Naive thymus-derived CD8-positive, alpha-beta T cell (primary cell): ENCODE measurements at regions of chr3 and their contacts with region 1.

Region 1: DNA sequence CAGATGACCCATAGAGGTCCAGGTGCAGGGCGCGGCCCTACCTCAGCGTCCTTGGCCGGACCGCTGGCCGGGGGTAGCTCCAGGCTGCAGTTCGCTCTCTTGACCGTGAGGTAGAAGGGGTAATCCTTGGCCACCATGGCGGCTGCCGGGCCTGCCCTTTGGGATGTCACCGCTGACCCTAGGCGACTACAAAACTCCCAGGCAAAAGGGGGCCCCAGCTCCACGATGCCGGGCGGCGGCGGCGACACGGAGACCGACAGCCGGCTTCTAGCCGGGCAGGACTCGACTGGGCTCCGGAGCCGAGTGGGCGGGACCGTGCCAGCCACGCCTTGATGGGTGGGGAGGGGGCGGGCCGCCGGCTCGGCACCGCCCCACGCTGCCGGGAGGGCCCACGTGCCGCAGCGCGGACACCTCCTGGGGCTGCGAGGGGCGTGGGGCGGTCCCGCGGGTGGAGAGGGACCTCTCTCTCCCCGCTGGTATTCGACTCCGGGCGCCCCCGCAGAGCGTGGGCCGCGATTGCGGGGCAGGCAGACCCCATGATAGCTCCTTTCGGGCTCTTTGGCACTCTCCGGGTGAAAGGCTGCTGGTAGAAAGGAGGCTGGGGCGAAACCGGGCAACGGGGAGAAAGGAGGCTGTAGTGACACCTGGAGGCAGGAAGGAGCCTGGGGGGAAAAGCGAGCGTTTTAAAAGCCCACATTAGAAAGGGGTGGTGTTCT is at the start of gene ARHGEF3:
- DNase-seq: peak; percentile 81 to 95 (median 90)
- ATAC-seq: peak; percentile 76 to 83
- H3K4me3 Mint-ChIP-seq: peak within 1 kb of the TSS; percentile 91 to 100 (median 96)
- H3K27ac Mint-ChIP-seq: peak within 1 kb of the TSS; percentile 79 to 96 (median 92)
- H3K4me1 Mint-ChIP-seq: peaks cover 17 to 50% (median 32%) of the 10 kb centered on the region in 4 donors
- H3K27me3 Mint-ChIP-seq: no peaks in the 10 kb centered on the region
- polyA plus RNA-seq, gene ARHGEF3: 95.3 to 101 (median 96.9) TPM

Region 2: GRCh38 chr3:56702490-56703315 is 99.1 kb before region 1 on chr3:
- POLR2A ChIA-PET with region 1: interaction called, 107 read pairs
- DNase-seq: peak in 9 of 10 donors; percentile 34 to 75 (median 57)
- ATAC-seq: peak; percentile 76 to 79
- H3K4me3 Mint-ChIP-seq: no peak overlapping the region
- H3K27ac Mint-ChIP-seq: peak overlapping the region in 5 of 10 donors; percentile 8 to 46 (median 20)
- H3K4me1 Mint-ChIP-seq: peaks cover 18 to 31% (median 27%) of the 10 kb centered on the region in 4 donors
- H3K27me3 Mint-ChIP-seq: no peaks in the 10 kb centered on the region

Region 3: GRCh38 chr3:56753206-56753820 is 48.5 kb before region 1 on chr3:
- POLR2A ChIA-PET with region 1: interaction called, 145 read pairs
- DNase-seq: peak in 1 of 10 donors; percentile 15
- ATAC-seq: peak in 1 of 2 donors; percentile 67
- H3K4me3 Mint-ChIP-seq: peak overlapping the region in 9 of 10 donors; percentile 8 to 96 (median 88)
- H3K27ac Mint-ChIP-seq: peak overlapping the region; percentile 78 to 99 (median 97)
- H3K4me1 Mint-ChIP-seq: peaks cover 32 to 82% (median 69%) of the 10 kb centered on the region in 4 donors
- H3K27me3 Mint-ChIP-seq: no peaks in the 10 kb centered on the region

Region 4: DNA sequence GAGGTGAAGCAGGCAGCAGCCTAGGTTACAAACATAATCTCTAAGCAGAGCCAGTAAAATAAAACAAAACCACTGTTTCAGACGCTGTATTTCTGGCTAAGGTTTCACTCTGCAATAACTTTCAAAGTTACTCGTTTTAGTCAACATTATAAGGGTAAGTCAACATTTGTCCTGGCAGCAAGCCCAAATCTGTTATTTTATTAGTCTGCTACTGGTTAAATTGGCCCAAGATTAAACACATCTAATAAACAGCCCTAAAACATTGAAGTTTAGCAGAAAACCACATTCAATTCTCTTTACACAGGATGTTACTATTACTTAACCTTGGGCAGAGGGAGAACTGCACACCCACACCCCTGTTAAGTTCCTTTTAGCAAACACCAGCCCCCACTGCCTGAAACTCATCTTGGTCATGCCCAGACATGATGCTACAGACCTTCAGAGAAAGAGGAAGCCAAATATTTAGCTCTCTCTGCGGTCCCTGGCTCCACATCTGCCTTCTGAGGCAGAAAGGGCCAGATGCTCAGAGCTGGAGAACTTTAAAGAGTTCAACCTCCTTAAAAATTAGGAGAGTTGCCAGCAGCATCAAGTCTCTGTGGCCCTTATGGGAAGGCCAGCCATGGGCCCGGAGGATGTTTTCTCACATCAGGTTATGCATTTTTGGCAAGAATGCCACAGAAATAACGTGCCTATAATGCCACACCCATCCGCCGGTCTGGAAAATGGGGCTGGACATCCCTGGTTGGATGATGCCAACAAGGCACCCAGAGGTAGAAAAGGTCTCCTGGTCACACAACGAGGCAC is 18.0 kb before region 1 on chr3:
- POLR2A ChIA-PET with region 1: interaction called, 278 read pairs
- DNase-seq: peak; percentile 16 to 90 (median 72)
- ATAC-seq: peak; percentile 85 to 90
- H3K4me3 Mint-ChIP-seq: peak overlapping the region; percentile 54 to 84 (median 78)
- H3K27ac Mint-ChIP-seq: peak overlapping the region; percentile 88 to 98 (median 96)
- H3K4me1 Mint-ChIP-seq: peaks cover 50 to 100% (median 98%) of the 10 kb centered on the region in 4 donors
- H3K27me3 Mint-ChIP-seq: no peaks in the 10 kb centered on the region

Region 5: DNA sequence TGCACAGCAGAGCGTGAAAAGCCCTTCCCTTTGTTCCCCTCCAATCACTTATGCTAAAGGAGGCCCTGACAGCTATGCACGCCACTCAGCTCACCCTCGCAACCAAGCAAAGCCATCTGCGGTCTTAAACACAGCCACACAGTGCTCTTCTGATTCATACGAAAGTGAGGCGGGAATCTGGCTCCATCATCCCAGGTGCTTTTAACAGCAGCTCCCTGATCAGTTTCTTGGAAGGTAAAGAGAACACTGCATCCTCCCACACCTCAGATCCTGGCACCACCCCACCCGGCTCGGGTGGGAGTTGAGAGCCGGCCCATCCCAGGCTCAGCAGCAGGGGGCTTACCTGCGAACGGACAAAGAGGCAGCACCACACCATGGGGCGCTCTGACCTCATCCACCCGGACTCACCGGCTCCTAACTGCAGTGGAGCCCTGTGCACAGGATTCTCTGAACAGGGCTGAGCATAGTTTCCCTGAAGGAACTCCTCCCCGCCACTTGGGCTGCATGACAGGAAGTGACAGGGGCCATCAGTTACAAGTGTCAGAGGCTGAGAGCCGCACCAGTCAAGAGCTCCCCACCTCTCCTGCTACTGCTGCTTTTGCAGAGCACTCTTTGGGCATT is 114.3 kb after region 1 on chr3:
- POLR2A ChIA-PET with region 1: interaction called, 69 read pairs
- DNase-seq: peak; percentile 40 to 84 (median 65)
- ATAC-seq: peak; percentile 90 to 93
- H3K4me3 Mint-ChIP-seq: peak overlapping the region; percentile 89 to 100 (median 91)
- H3K27ac Mint-ChIP-seq: peak overlapping the region; percentile 93 to 99 (median 94)
- H3K4me1 Mint-ChIP-seq: peaks cover 38 to 78% (median 71%) of the 10 kb centered on the region in 4 donors
- H3K27me3 Mint-ChIP-seq: no peaks in the 10 kb centered on the region